Naive thymus-derived CD4-positive, alpha-beta T cell (primary cell): ENCODE measurements at regions of chr4 and their contacts with region 1.

Region 1: GRCh38 chr4:22237155-22237751 is 278.6 kb downstream of the ADGRA3 start:
- DNase-seq: peak; percentile 11 to 57 (median 40)
- ATAC-seq: peak; percentile 73
- H3K4me3 ChIP-seq: no peak overlapping the region
- H3K4me3 Mint-ChIP-seq: peak overlapping the region; percentile 51 to 80 (median 68)
- H3K27ac ChIP-seq: peak overlapping the region; percentile 14
- H3K27ac Mint-ChIP-seq: peak overlapping the region in 5 of 9 donors; percentile 4 to 92 (median 48)
- H3K4me1 ChIP-seq: no peaks in the 10 kb centered on the region
- H3K4me1 Mint-ChIP-seq: peaks cover 0 to 35% (median 0%) of the 10 kb centered on the region in 7 donors
- H3K27me3 ChIP-seq: no peaks in the 10 kb centered on the region
- H3K27me3 Mint-ChIP-seq: peaks cover 0 to 15% (median 3%) of the 10 kb centered on the region in 5 donors

Region 2: GRCh38 chr4:21790438-21791029 is 446.7 kb before region 1 on chr4:
- CTCF ChIA-PET with region 1: no interaction called
- POLR2A ChIA-PET with region 1: no interaction called
- intact Hi-C with region 1: loop called in 1 of 2 experiments (anchors 1 kb)
- DNase-seq: peak in 3 of 9 donors; percentile 5 to 13 (median 13)
- ATAC-seq: no peak
- H3K4me3 ChIP-seq: no peak overlapping the region
- H3K4me3 Mint-ChIP-seq: no peak overlapping the region
- H3K27ac ChIP-seq: no peak overlapping the region
- H3K27ac Mint-ChIP-seq: no peak overlapping the region
- H3K4me1 ChIP-seq: no peaks in the 10 kb centered on the region
- H3K4me1 Mint-ChIP-seq: peaks cover 0 to 2% (median 0%) of the 10 kb centered on the region in 7 donors
- H3K27me3 ChIP-seq: no peaks in the 10 kb centered on the region
- H3K27me3 Mint-ChIP-seq: peaks cover 0 to 4% (median 0%) of the 10 kb centered on the region in 5 donors

Region 3: DNA sequence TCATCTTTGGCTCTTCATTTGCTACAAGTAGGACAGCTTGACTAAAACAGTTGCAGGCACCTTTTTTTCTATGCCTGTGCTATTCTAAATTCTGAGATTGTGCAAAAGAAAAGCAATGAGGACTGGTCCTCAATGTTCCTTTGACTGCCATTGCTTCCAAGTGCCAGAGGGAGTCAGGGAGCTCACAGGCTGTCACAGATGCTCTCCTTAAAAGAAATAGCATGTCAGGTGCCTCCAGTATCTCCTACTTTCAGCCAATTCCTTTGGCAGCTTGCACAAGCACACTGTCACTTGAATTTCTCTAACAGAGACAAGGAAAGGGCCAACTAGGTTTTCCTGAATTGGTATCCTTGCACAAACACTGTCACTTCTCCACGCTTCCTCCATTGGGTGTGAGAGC is 50.4 kb after region 1 on chr4:
- CTCF ChIA-PET with region 1: no interaction called
- POLR2A ChIA-PET with region 1: no interaction called
- intact Hi-C with region 1: no loop called
- DNase-seq: no peak
- ATAC-seq: no peak
- H3K4me3 ChIP-seq: no peak overlapping the region
- H3K4me3 Mint-ChIP-seq: no peak overlapping the region
- H3K27ac ChIP-seq: no peak overlapping the region
- H3K27ac Mint-ChIP-seq: no peak overlapping the region
- H3K4me1 ChIP-seq: no peaks in the 10 kb centered on the region
- H3K4me1 Mint-ChIP-seq: peaks cover 0 to 3% (median 0%) of the 10 kb centered on the region in 7 donors
- H3K27me3 ChIP-seq: no peaks in the 10 kb centered on the region
- H3K27me3 Mint-ChIP-seq: peaks cover 0 to 14% (median 4%) of the 10 kb centered on the region in 5 donors

Region 4: DNA sequence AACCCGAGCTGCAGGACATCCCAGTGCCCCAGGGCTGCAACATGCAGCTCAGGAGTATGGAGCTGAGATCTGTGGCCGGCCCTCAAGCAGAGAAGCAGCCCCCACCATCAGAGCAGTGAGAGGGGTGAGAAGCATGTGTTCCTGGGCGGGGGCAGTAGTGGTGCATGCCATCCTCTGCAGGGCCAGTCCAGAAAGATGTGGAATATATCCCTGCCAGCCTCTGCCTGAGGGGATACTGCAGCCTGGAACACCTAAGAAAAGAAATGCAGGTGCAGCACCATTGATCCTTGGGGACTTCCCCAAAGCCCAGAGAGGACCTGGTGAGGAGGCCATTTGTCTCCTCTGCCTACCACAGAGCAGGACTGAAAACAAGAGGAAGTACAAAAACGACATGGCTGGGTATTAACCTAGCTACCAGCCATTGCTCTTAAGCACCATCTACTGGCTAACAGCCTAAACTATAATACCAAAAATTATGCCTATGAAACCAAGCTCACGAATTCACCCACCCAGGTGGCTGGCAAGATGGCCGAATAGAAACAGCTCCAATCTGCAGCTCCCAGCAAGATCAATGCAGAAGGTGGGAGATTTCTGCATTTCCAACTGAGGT is 119.8 kb after region 1 on chr4:
- CTCF ChIA-PET with region 1: no interaction called
- POLR2A ChIA-PET with region 1: no interaction called
- intact Hi-C with region 1: loop called in 1 of 2 experiments (anchors 1 kb)
- DNase-seq: peak in 1 of 9 donors; percentile 3
- ATAC-seq: peak; percentile 46
- H3K4me3 ChIP-seq: no peak overlapping the region
- H3K4me3 Mint-ChIP-seq: no peak overlapping the region
- H3K27ac ChIP-seq: no peak overlapping the region
- H3K27ac Mint-ChIP-seq: no peak overlapping the region
- H3K4me1 ChIP-seq: no peaks in the 10 kb centered on the region
- H3K4me1 Mint-ChIP-seq: peaks cover 0 to 2% (median 0%) of the 10 kb centered on the region in 7 donors
- H3K27me3 ChIP-seq: no peaks in the 10 kb centered on the region
- H3K27me3 Mint-ChIP-seq: peaks cover 4 to 6% (median 5%) of the 10 kb centered on the region in 5 donors

Region 5: DNA sequence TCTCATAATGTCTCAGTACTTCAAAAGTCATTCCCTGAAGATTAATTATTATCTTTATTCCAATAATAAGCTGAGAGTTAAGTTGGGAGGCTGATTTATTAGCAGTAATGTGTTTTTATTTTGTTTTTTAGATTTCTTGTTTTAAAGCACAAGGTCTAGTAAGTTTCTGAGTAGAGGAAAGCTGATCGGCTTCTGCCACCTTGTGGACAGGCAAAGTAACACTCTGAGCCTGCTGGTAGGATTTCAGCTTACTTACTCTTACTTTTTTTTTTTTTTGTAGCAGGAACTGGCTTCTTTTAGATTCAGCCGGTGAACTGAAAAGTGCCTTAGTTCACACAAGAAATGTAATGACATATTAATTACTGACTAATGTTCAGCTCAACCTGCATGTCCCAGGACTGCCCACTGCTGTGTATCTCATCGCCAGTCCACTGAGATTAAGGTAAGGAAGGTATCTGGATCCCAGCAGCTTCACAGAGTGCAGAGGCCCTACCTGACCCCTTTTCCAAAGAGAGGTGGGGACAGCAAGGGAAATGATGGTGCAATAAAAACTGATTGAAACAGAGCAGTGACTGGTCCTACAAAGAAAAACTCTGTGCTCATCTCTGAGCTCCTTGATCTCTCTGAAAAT is 152.1 kb after region 1 on chr4:
- CTCF ChIA-PET with region 1: no interaction called
- POLR2A ChIA-PET with region 1: no interaction called
- intact Hi-C with region 1: loop called (anchors 1 to 2 kb)
- DNase-seq: peak in 7 of 9 donors; percentile 24 to 58 (median 44)
- ATAC-seq: peak; percentile 55
- H3K4me3 ChIP-seq: no peak overlapping the region
- H3K4me3 Mint-ChIP-seq: no peak overlapping the region
- H3K27ac ChIP-seq: no peak overlapping the region
- H3K27ac Mint-ChIP-seq: peak overlapping the region in 1 of 9 donors; percentile 7
- H3K4me1 ChIP-seq: no peaks in the 10 kb centered on the region
- H3K4me1 Mint-ChIP-seq: peaks cover 0 to 4% (median 0%) of the 10 kb centered on the region in 7 donors
- H3K27me3 ChIP-seq: no peaks in the 10 kb centered on the region
- H3K27me3 Mint-ChIP-seq: no peaks in the 10 kb centered on the region

Region 6: DNA sequence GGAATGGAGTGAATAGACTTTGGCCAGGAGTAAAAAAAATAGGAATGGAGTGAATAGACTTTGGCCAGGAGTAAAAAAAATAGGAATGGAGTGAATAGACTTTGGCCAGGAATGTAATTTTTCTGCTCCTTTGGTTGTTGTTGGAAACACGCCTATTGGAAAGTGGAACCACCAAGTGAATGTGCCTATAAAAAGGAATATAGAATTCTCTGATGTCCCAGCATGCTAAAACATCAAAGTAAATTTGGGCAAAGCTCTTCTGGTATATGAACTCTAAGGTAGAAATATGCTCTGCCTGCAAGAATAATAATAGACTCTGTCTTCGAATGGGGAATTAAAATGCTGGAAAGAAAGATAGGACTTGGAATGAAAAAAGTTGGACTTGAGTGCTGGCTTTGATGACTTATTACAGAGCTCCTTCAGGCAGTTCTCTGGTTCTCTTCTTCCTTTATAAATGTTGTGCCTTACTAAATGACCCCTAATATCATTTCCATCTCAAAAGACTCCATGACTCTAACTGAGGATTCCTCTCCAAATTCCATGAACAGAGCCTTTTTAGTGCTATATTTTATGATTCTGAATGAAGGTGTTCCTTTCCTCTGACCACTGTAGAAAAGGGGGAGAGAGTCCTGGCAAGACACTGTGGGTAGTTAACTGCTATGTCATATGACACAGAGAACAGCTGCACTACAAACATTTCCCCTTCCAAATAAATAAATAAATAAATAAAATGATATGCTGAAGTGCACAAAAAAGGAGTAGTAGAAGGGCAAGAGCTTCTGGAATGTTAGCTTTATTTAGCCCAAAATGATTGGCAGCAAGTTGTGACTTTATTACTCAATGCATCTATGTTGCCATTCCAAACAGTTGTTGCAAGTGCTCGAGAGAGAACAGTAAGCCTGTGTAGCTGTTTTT is 441.9 kb after region 1 on chr4:
- CTCF ChIA-PET with region 1: no interaction called
- POLR2A ChIA-PET with region 1: no interaction called
- intact Hi-C with region 1: loop called in 1 of 2 experiments (anchors 5 kb)
- DNase-seq: no peak
- ATAC-seq: no peak
- H3K4me3 ChIP-seq: no peak overlapping the region
- H3K4me3 Mint-ChIP-seq: peak overlapping the region in 1 of 10 donors; percentile 48
- H3K27ac ChIP-seq: no peak overlapping the region
- H3K27ac Mint-ChIP-seq: peak overlapping the region in 5 of 9 donors; percentile 31 to 73 (median 64)
- H3K4me1 ChIP-seq: peaks cover 0 to 24% of the 10 kb centered on the region in 2 donors
- H3K4me1 Mint-ChIP-seq: peaks cover 9 to 76% (median 66%) of the 10 kb centered on the region in 7 donors
- H3K27me3 ChIP-seq: no peaks in the 10 kb centered on the region
- H3K27me3 Mint-ChIP-seq: no peaks in the 10 kb centered on the region